H1 (cell line): ENCODE measurements at regions of chr17 and their contacts with region 1.

Region 1: GRCh38 chr17:55295411-55296170 is 30.8 kb downstream of the HLF start:
- DNase-seq: peak; percentile 31 to 76
- H3K4me3 ChIP-seq: no peak overlapping the region
- H3K27ac ChIP-seq: no peak overlapping the region
- H3K4me1 ChIP-seq: no peaks in the 10 kb centered on the region
- H3K27me3 ChIP-seq: no peaks in the 10 kb centered on the region
- CTCF ChIP-seq: peak; percentile 74 to 83 (median 77)
- EP300 ChIP-seq: no peak
- POLR2A ChIP-seq: no peak
- RAD21 ChIP-seq: peak; percentile 79 to 82

Region 2: GRCh38 chr17:54992797-54993639 is 302.6 kb before region 1 on chr17:
- CTCF ChIA-PET with region 1: interaction called, 14 read pairs
- POLR2A ChIA-PET with region 1: no interaction called
- DNase-seq: no peak
- H3K4me3 ChIP-seq: no peak overlapping the region
- H3K27ac ChIP-seq: no peak overlapping the region
- H3K4me1 ChIP-seq: no peaks in the 10 kb centered on the region
- H3K27me3 ChIP-seq: no peaks in the 10 kb centered on the region
- CTCF ChIP-seq: peak in 2 of 3 experiments; percentile 45 to 47; a peak in 2 of 4 replicates
- EP300 ChIP-seq: no peak
- POLR2A ChIP-seq: no peak
- RAD21 ChIP-seq: peak; percentile 63 to 67

Region 3: GRCh38 chr17:55053855-55054254 is 241.7 kb before region 1 on chr17:
- CTCF ChIA-PET with region 1: interaction called, 11 read pairs
- POLR2A ChIA-PET with region 1: no interaction called
- DNase-seq: no peak
- H3K4me3 ChIP-seq: no peak overlapping the region
- H3K27ac ChIP-seq: no peak overlapping the region
- H3K4me1 ChIP-seq: no peaks in the 10 kb centered on the region
- H3K27me3 ChIP-seq: no peaks in the 10 kb centered on the region
- CTCF ChIP-seq: peak in 1 of 3 experiments; percentile 7; a peak in 1 of 4 replicates
- EP300 ChIP-seq: no peak
- POLR2A ChIP-seq: no peak
- RAD21 ChIP-seq: peak in 1 of 2 experiments; percentile 41; a peak in 2 of 4 replicates

Region 4: GRCh38 chr17:55314061-55314783 is 18.6 kb after region 1 on chr17:
- CTCF ChIA-PET with region 1: interaction called, 10 read pairs
- POLR2A ChIA-PET with region 1: no interaction called
- DNase-seq: no peak
- H3K4me3 ChIP-seq: no peak overlapping the region
- H3K27ac ChIP-seq: no peak overlapping the region; the same call in 1 of the 2 replicates
- H3K4me1 ChIP-seq: no peaks in the 10 kb centered on the region
- H3K27me3 ChIP-seq: no peaks in the 10 kb centered on the region
- CTCF ChIP-seq: no peak
- EP300 ChIP-seq: no peak
- POLR2A ChIP-seq: no peak
- RAD21 ChIP-seq: no peak

Region 5: DNA sequence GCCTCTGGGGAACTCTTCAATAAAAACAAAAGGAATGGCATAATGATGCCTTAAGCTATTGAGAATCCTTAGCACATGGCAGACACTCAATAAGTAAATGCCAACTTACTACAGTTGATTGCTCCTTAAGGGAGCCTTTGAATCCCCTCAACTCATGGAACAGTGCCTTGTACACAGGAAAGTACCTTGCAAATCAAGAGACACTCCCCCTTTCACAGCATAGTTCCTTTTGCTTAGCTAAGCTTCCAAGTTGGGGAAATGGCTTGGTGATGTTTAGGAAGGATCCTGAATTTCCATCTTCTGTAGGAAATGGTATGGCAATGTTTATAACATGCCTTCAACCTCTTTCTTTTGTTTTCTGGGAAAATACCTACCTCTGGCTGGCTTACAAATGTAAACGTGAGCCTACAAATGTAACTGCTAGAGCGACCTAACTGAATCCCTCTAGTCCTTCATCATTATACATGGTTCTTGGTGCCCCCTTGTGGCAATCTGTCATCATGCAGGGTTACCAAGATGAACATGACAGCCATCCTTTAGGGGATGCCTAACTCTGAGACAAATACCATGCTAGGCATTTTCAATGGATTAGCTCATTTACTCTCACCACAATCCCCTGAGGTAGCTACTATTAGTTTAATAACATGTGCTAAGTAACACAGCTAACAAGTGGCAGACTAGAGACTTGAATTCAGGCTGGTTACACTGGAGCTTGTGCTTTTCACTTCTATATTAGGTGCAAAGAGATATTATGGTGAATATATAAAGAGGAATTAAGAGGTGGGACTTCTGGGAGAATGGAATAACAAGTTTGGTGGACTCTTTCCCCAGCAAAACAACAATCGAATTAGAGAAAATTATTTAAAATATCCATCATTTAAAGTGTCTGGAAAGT is 61.1 kb after region 1 on chr17:
- CTCF ChIA-PET with region 1: interaction called, 12 read pairs
- POLR2A ChIA-PET with region 1: no interaction called
- DNase-seq: peak; percentile 51 to 84
- H3K4me3 ChIP-seq: no peak overlapping the region
- H3K27ac ChIP-seq: no peak overlapping the region
- H3K4me1 ChIP-seq: peaks cover 0 to 4% (median under 1%) of the 10 kb centered on the region in 4 experiments; a peak in 3 of 7 replicates
- H3K27me3 ChIP-seq: no peaks in the 10 kb centered on the region; a peak in 1 of 7 replicates
- CTCF ChIP-seq: peak in 2 of 3 experiments; percentile 76 to 92; a peak in 3 of 4 replicates
- EP300 ChIP-seq: no peak
- POLR2A ChIP-seq: no peak
- RAD21 ChIP-seq: peak; percentile 84 to 90